Activated naive CD4-positive, alpha-beta T cell treated with anti-CD3 and anti-CD28 coated beads for 36 hours (primary cell): ENCODE measurements at regions of chr14 and their contacts with region 1.

Region 1: GRCh38 chr14:91866061-91866460 is 1.3 kb downstream of the TC2N start:
- DNase-seq: peak; percentile 63
- H3K4me3 Mint-ChIP-seq: peak overlapping the region; percentile 73
- H3K27ac Mint-ChIP-seq: peak overlapping the region; percentile 96
- H3K4me1 Mint-ChIP-seq: peaks cover 75% of the 10 kb centered on the region
- H3K27me3 Mint-ChIP-seq: no peaks in the 10 kb centered on the region

Region 2: DNA sequence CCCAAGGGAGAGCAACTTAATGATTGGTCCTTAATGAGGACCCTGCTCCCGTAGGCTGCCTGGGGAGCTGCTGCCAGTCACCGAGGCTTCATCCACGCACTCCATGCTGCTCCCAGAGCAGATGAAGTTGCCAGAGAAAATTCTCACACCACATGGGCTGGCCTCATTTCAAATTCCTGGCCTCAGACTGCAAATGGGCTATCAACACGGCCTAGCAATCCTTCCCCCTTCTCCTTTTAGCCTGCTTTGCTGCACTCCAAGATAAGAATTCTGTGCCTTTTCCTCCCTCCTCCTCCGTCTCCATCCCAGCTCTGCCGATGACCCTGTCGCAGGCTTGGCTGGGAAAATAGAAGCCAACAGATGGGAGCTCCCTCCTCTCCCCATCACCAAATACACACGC is 762.9 kb before region 1 on chr14:
- CTCF ChIA-PET with region 1: no interaction called
- intact Hi-C with region 1: no loop called
- DNase-seq: no peak
- H3K4me3 Mint-ChIP-seq: no peak overlapping the region
- H3K27ac Mint-ChIP-seq: no peak overlapping the region
- H3K4me1 Mint-ChIP-seq: peaks cover 7% of the 10 kb centered on the region
- H3K27me3 Mint-ChIP-seq: no peaks in the 10 kb centered on the region

Region 3: GRCh38 chr14:91249841-91250616 is 616.0 kb before region 1 on chr14:
- CTCF ChIA-PET with region 1: no interaction called
- intact Hi-C with region 1: loop called (anchors 5 kb)
- DNase-seq: peak; percentile 42
- H3K4me3 Mint-ChIP-seq: no peak overlapping the region
- H3K27ac Mint-ChIP-seq: peak overlapping the region; percentile 70
- H3K4me1 Mint-ChIP-seq: peaks cover 81% of the 10 kb centered on the region
- H3K27me3 Mint-ChIP-seq: no peaks in the 10 kb centered on the region

Region 4: DNA sequence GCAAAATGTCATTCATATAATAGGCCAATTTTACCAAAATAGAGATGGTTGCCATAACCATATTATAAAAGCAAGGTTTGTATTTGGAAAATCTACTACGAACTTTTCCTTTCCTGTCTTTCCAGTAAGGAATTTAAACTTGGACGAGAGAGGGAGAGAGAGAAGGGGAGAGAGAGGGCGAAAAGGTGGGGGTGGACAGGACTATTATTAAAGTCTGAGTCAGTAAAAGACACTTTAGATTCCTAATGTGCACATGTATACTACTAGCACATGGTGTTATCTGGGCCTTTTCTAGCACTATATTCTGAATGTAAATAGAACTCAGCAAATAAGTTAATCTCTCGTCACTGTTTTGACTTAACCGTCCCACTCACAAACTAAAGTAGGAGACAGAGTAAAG is 111.8 kb after region 1 on chr14:
- CTCF ChIA-PET with region 1: no interaction called
- intact Hi-C with region 1: no loop called
- DNase-seq: no peak
- H3K4me3 Mint-ChIP-seq: no peak overlapping the region
- H3K27ac Mint-ChIP-seq: no peak overlapping the region
- H3K4me1 Mint-ChIP-seq: peaks cover 29% of the 10 kb centered on the region
- H3K27me3 Mint-ChIP-seq: no peaks in the 10 kb centered on the region